ENCODE measurements at regions of chr2 and their contacts with region 1.

Region 1: DNA sequence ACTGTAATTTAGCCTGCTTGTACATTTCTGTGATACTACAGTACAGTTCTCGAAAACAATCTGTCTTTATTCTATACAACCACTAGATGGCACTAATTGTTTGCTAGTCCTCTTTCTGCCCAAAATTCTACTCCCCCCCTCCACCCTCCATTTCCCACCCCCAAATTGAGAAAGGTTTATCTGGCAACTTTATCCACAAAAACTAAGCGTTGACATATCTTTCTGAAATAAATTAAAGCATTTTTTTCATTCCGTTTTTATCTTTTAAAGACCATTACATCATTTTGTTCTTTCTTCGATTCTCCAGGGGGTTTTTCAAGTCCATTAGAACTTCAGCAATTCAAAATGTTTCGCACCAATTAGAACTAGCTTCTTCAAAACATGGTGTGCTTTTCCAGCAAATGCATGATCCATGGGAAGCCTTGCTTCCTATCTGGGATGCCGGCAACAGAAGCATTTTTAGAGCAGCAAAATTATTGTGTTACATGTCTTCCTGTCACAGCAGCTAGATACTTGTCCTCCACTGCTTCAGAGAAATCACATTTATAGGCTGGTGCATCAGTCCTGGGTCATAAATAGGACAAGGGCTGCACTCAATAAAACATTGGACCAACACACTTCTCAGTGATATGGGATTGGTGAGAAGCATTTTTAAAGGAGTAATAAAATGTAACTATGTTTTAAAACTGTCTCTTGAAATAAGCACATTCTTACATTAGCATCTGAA is 241.3 kb downstream of the PAX3 start:
- DNase-seq: no peak
- ATAC-seq: peak; percentile 86

Region 2: GRCh38 chr2:221851531-221852045 is 205.9 kb before region 1 on chr2:
- intact Hi-C with region 1: no loop called
- DNase-seq: no peak
- ATAC-seq: no peak

Region 3: GRCh38 chr2:221924576-221924975 is 132.9 kb before region 1 on chr2:
- intact Hi-C with region 1: no loop called
- DNase-seq: no peak
- ATAC-seq: no peak

Region 4: DNA sequence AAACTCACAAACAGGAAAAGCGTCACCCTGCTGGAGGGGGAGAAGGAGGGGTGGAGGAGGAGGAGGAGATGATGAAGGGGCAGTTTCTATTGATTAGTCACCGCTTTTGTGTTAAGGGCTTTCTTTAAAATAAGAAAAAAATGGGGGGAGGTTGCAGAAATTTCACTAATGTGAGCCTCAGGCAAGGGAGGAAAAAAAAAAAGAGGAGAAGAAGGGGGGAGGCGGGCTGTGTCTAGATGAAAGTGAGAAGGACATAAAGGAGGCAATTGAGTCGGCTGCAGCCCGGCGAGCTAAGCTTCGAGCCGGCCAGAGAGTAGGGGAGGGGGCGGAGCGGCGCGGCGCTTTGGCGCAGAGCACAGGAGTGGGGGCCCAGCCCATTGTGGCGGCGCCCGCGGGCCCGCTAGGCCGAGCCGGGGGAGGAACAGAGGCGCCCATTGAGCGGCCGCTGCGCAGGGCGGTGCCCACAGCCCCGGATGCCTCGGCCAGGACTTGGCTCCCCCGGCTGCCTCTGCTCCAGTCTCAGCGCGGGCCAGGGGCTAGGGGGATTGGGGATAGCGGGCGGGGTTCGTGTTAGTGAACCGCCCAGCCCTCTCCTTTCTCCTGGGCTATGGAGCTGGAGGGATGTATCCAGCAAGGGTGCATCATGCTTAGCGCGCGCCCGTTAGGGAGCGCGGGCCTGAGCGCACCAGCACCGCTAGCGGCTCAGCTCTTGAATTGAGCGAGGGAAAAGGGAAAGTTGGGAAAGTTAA is 233.4 kb after region 1 on chr2:
- intact Hi-C with region 1: loop called (anchors 10 kb)
- DNase-seq: no peak
- ATAC-seq: no peak

Region 5: GRCh38 chr2:222613715-222614331 is 556.3 kb after region 1 on chr2:
- intact Hi-C with region 1: loop called (anchors 5 kb)
- DNase-seq: no peak
- ATAC-seq: peak; percentile 68